T-cell (primary cell): ENCODE measurements at regions of chr7 and their contacts with region 1.

Region 1: GRCh38 chr7:10863476-10863875 is 110.2 kb upstream of the PHF14 start:
- DNase-seq: no peak
- ATAC-seq: no peak
- H3K4me3 ChIP-seq: no peak overlapping the region
- H3K4me3 Mint-ChIP-seq: no peak overlapping the region
- H3K27ac ChIP-seq: no peak overlapping the region
- H3K27ac Mint-ChIP-seq: no peak overlapping the region
- H3K4me1 ChIP-seq: no peaks in the 10 kb centered on the region
- H3K4me1 Mint-ChIP-seq: no peaks in the 10 kb centered on the region
- H3K27me3 ChIP-seq: peaks cover 0 to 2% of the 10 kb centered on the region in 2 experiments
- H3K27me3 Mint-ChIP-seq: peaks cover 4 to 9% of the 10 kb centered on the region in 2 donors

Region 2: DNA sequence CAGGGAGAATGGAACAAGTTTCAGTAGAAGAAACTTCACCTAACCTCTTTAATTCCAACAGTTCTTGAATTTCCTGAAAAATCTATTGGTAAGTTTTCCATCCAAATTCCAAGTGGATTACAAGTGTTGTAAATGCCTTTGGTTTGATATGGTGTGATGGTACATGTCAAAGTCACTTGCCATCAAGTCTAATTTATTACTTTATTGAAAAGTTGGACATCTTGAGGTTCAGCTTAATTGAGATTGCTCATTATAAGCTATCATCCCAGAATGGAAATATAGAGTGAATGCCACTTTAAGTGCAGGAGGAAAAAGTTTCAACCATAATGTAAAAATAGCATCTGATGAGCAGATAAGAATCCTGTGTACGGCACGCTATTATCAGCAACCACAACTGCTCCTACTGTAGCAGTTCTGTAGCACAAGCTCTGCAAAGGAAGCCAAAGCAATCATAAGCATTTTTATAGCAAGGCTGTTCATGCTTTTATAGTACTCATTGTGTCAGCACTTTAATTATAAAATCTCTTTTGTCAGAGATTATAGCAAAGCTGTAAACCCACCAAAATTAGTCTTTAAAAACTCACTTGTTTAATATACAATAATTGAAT is 881.6 kb before region 1 on chr7:
- CTCF ChIA-PET with region 1: no interaction called
- POLR2A ChIA-PET with region 1: no interaction called
- DNase-seq: no peak
- ATAC-seq: no peak
- H3K4me3 ChIP-seq: no peak overlapping the region
- H3K4me3 Mint-ChIP-seq: no peak overlapping the region
- H3K27ac ChIP-seq: no peak overlapping the region
- H3K27ac Mint-ChIP-seq: no peak overlapping the region
- H3K4me1 ChIP-seq: no peaks in the 10 kb centered on the region
- H3K4me1 Mint-ChIP-seq: no peaks in the 10 kb centered on the region
- H3K27me3 ChIP-seq: no peaks in the 10 kb centered on the region
- H3K27me3 Mint-ChIP-seq: no peaks in the 10 kb centered on the region

Region 3: DNA sequence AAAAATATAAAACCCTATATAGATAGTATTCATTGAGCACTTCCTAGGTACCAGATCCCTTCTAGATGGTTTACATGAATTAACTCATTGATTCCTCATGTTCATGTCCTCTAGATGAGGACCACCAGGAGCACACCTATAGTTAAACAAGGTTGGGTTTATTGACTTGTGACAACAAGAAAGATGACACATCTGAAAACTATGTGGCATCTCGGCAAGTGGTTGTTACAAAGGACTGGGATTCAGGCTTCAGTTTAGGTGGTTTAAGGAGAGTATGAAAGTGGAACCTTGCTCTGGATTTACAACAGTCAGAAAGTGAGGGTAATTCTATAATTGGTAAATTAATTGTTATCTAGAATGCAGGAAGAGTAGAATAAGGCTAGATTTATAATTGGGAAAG is 11.2 kb after region 1 on chr7:
- CTCF ChIA-PET with region 1: no interaction called
- POLR2A ChIA-PET with region 1: no interaction called
- DNase-seq: no peak
- ATAC-seq: no peak
- H3K4me3 ChIP-seq: no peak overlapping the region
- H3K4me3 Mint-ChIP-seq: no peak overlapping the region
- H3K27ac ChIP-seq: no peak overlapping the region
- H3K27ac Mint-ChIP-seq: no peak overlapping the region
- H3K4me1 ChIP-seq: no peaks in the 10 kb centered on the region
- H3K4me1 Mint-ChIP-seq: no peaks in the 10 kb centered on the region
- H3K27me3 ChIP-seq: no peaks in the 10 kb centered on the region
- H3K27me3 Mint-ChIP-seq: peaks cover 19 to 35% of the 10 kb centered on the region in 2 donors

Region 4: DNA sequence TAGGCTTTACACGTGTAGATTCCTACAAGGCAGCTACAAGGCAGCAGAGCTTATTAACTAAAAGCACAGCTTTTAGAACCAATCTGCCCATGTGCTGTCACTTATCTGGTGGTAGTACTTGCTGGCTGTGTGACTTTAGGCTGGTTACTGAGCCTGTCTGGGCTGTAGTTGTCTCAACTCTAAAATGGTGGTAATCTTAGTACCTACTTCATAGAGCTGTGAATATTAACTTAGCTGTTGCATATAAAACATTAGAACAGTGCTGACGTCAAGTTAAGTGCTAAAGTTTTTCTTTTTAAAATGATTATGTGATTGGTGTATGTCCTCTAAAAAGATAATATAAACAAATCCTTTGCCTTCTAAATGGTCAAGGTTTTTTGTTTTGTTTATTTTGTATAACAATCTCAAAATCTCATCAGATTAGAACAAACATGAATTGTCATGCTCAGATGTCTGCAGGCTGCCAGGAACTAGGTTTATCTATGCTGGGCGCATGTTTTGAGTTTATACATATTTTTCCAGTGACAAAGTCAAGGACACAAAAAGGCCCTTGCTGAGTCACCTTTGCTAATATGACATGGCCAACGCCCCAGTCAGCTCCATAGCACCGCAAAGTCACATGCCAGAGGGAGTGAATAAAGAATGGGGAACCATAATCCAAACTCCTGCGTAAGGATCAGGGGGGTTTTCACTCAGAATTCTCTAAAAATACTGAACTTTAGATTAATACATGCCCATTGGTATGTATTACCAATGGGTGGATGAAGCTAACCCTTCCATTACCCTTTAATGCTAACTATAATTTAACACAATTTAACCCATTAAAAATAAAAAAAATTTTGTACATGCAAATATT is 1784.1 kb after region 1 on chr7:
- CTCF ChIA-PET with region 1: no interaction called
- POLR2A ChIA-PET with region 1: interaction called in 1 of 2 experiments, 10 read pairs
- DNase-seq: no peak
- ATAC-seq: no peak
- H3K4me3 ChIP-seq: no peak overlapping the region
- H3K4me3 Mint-ChIP-seq: no peak overlapping the region
- H3K27ac ChIP-seq: no peak overlapping the region
- H3K27ac Mint-ChIP-seq: no peak overlapping the region
- H3K4me1 ChIP-seq: no peaks in the 10 kb centered on the region
- H3K4me1 Mint-ChIP-seq: no peaks in the 10 kb centered on the region
- H3K27me3 ChIP-seq: no peaks in the 10 kb centered on the region
- H3K27me3 Mint-ChIP-seq: no peaks in the 10 kb centered on the region